ENCODE measurements at regions of chr17 and their contacts with region 1.

Region 1: GRCh38 chr17:18033442-18034099 is 5.4 kb downstream of the ATPAF2 start:
- DNase-seq: peak; percentile 76
- ATAC-seq: peak; percentile 72
- H3K4me3 Mint-ChIP-seq: no peak overlapping the region
- H3K27ac Mint-ChIP-seq: no peak overlapping the region
- H3K4me1 Mint-ChIP-seq: peaks cover 34% of the 10 kb centered on the region
- H3K27me3 Mint-ChIP-seq: no peaks in the 10 kb centered on the region
- CTCF ChIP-seq: peak; percentile 80

Region 2: DNA sequence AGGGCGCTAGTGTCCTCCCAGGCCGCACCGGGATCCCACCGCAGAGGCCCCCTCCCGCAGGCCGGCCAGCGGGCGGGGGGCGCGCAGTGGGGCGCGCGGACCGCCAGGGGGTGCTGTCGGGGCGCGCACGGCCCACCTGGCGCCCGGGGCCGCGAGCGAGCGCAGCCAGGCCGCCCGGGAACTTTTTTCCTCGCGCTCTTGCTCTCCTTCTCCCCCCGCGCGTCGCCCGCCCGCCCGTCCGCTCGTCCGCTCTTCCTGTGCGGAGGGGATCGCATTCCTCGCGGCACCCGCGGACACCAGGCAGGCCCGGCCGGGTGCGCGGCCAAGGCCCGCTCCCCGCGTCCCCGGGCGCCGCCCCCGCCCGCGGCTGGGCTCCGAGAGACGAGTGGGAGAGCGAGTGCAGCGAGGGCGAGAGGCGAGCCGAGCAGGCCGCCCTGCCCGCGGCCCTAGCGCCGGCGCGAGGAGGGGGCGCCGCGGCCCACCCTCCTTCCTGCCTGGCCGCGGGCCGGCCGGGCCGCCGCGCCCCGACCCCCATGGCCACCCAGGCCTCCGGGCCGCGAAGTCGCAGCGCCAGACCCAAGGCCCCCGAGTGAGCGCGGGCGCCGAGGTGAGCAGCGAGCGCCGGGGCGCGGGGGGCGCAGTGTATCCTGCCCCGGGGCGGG is 352.3 kb before region 1 on chr17 and contains the start of gene RAI1:
- CTCF ChIA-PET with region 1: interaction called, 10 read pairs
- POLR2A ChIA-PET with region 1: no interaction called
- intact Hi-C with region 1: no loop called
- DNase-seq: peak; percentile 73
- ATAC-seq: peak; percentile 65
- H3K4me3 Mint-ChIP-seq: peak within 1 kb of the TSS; percentile 80
- H3K27ac Mint-ChIP-seq: peak within 1 kb of the TSS; percentile 91
- H3K4me1 Mint-ChIP-seq: peaks cover 37% of the 10 kb centered on the region
- H3K27me3 Mint-ChIP-seq: no peaks in the 10 kb centered on the region
- CTCF ChIP-seq: peak; percentile 60
- total RNA-seq, gene RAI1: 18.1 to 20.3 TPM

Region 3: DNA sequence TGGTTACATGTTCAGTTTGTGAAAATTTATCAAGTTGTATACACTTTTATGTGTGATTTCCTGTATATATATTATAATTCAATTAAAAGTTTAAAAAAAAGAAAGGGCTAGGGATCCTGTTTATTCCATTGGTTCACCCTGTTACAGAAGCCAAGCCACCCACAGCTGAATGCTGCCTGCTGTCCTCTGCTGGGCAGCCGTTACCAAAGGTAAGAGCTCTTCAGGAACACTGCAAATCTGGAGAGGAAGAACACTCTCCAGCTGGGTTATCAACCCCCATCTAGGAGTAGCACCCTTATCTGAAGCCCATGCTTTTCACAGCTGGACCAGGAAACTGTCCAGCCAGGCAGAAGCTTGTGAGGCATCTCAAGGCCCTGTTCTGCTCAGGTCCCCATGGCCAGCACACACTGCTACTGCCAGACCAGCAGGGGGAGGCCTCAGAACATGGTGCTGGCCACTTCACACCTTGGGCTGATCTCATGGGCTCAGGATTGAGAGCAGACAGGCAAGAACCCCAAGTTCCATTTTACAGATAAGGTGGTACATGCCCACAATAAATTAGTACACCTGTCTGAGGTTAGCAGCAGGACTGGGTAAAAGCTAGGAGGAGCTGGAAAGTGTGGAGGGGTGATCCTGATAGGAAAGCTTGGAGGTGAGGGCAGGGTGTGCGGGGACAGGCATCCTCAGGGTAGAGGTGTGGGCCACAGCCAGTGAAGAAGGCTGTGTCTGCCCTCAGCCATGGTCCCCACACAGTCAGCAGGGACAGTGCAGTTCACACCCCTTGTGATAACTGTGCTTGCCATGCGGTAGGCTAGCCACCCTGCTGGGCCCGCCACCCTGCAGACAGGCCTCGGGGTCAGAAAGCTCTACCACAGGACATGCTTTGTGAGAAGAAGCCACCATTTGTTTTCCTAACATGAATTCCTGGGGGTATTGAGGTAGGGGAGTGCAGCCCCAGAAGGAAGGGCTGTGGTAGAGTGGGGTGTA is 142.5 kb before region 1 on chr17:
- CTCF ChIA-PET with region 1: interaction called, 18 read pairs
- POLR2A ChIA-PET with region 1: interaction called, 4 read pairs
- intact Hi-C with region 1: loop called (anchors 10 kb)
- DNase-seq: peak; percentile 61
- ATAC-seq: peak; percentile 97
- H3K4me3 Mint-ChIP-seq: no peak overlapping the region
- H3K27ac Mint-ChIP-seq: no peak overlapping the region
- H3K4me1 Mint-ChIP-seq: peaks cover 6% of the 10 kb centered on the region
- H3K27me3 Mint-ChIP-seq: no peaks in the 10 kb centered on the region
- CTCF ChIP-seq: peak; percentile 58

Region 4: DNA sequence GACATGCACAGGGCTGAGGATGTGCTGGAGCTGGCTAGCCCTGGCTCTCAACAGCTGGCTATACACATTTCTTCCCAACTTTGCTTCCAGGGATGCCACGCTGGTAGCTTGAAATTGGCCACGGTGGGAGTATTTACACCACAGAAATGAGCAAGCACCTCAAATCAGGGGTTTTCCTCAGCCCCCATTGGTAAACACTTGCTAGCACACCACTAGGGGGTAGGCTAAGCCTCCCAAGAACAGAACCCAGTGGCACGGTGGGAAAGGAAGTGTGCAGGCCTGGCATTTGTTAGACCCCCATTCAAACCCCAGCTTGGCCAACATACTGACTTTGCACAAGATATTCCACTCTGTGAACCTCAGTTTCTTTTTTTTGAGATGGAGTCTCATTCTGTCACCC is 48.0 kb before region 1 on chr17:
- CTCF ChIA-PET with region 1: interaction called, 20 read pairs
- POLR2A ChIA-PET with region 1: interaction called, 3 read pairs
- intact Hi-C with region 1: no loop called
- DNase-seq: peak; percentile 29
- ATAC-seq: peak; percentile 77
- H3K4me3 Mint-ChIP-seq: no peak overlapping the region
- H3K27ac Mint-ChIP-seq: no peak overlapping the region
- H3K4me1 Mint-ChIP-seq: no peaks in the 10 kb centered on the region
- H3K27me3 Mint-ChIP-seq: no peaks in the 10 kb centered on the region
- CTCF ChIP-seq: peak; percentile 22

Region 5: GRCh38 chr17:18158022-18158600 is 124.5 kb after region 1 on chr17:
- CTCF ChIA-PET with region 1: no interaction called
- POLR2A ChIA-PET with region 1: no interaction called
- intact Hi-C with region 1: no loop called
- DNase-seq: peak; percentile 99
- ATAC-seq: peak; percentile 81
- H3K4me3 Mint-ChIP-seq: peak overlapping the region; percentile 65
- H3K27ac Mint-ChIP-seq: peak overlapping the region; percentile 74
- H3K4me1 Mint-ChIP-seq: peaks cover 25% of the 10 kb centered on the region
- H3K27me3 Mint-ChIP-seq: no peaks in the 10 kb centered on the region
- CTCF ChIP-seq: no peak

Region 6: GRCh38 chr17:18324140-18325050 is 290.8 kb after region 1 on chr17:
- CTCF ChIA-PET with region 1: no interaction called
- POLR2A ChIA-PET with region 1: no interaction called
- intact Hi-C with region 1: no loop called
- DNase-seq: no peak
- ATAC-seq: no peak
- H3K4me3 Mint-ChIP-seq: no peak overlapping the region
- H3K27ac Mint-ChIP-seq: no peak overlapping the region
- H3K4me1 Mint-ChIP-seq: peaks cover 28% of the 10 kb centered on the region
- H3K27me3 Mint-ChIP-seq: no peaks in the 10 kb centered on the region
- CTCF ChIP-seq: no peak

Region 7: DNA sequence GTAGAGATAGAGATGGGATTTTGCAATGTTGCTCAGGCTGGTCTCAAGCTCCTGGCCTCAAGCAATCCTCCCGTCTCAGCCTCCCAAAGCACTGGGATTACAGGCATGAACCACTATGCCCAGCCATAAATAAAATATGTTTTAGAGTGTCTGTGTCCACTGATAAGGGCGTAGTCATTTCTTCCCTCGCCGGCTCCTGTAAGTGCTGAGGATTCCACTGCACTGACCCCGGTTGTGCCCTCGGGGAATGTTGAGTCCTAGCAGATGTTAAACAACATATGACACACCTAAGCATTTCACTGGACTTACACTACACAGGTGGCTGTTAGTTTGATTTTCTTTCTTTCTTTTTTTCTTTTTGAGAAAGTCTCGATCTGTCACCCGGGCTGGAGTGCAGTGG is 335.4 kb after region 1 on chr17:
- CTCF ChIA-PET with region 1: no interaction called
- POLR2A ChIA-PET with region 1: no interaction called
- intact Hi-C with region 1: no loop called
- DNase-seq: no peak
- ATAC-seq: no peak
- H3K4me3 Mint-ChIP-seq: no peak overlapping the region
- H3K27ac Mint-ChIP-seq: no peak overlapping the region
- H3K4me1 Mint-ChIP-seq: peaks cover 5% of the 10 kb centered on the region
- H3K27me3 Mint-ChIP-seq: peaks cover 6% of the 10 kb centered on the region
- CTCF ChIP-seq: no peak

Measured in activated CD8-positive, alpha-beta T cell treated with anti-CD3 and anti-CD28 coated beads for 36 hours (primary cell).